Activated CD8-positive, alpha-beta memory T cell treated with anti-CD3 and anti-CD28 coated beads, Interleukin-2, amount 10 ng/mL, durations not matched to agents 7 days and 5 days (primary cell): ENCODE measurements at regions of chr17 and their contacts with region 1.

Region 1: GRCh38 chr17:2253768-2254406 is 49.7 kb downstream of the SMG6 start:
- DNase-seq: peak; percentile 73
- ATAC-seq: peak; percentile 89
- H3K4me3 Mint-ChIP-seq: peak overlapping the region; percentile 53
- H3K27ac Mint-ChIP-seq: peak overlapping the region; percentile 93
- H3K4me1 Mint-ChIP-seq: peaks cover 78% of the 10 kb centered on the region
- H3K27me3 Mint-ChIP-seq: no peaks in the 10 kb centered on the region

Region 2: GRCh38 chr17:2266045-2266864 is 12.4 kb after region 1 on chr17:
- CTCF ChIA-PET with region 1: interaction called, 60 read pairs
- DNase-seq: peak; percentile 98
- ATAC-seq: peak; percentile 76
- H3K4me3 Mint-ChIP-seq: peak overlapping the region; percentile 79
- H3K27ac Mint-ChIP-seq: peak overlapping the region; percentile 100
- H3K4me1 Mint-ChIP-seq: peaks cover 85% of the 10 kb centered on the region
- H3K27me3 Mint-ChIP-seq: no peaks in the 10 kb centered on the region

Region 3: GRCh38 chr17:2282297-2282873 is 28.5 kb after region 1 on chr17:
- CTCF ChIA-PET with region 1: interaction called, 15 read pairs
- DNase-seq: no peak
- ATAC-seq: peak; percentile 39
- H3K4me3 Mint-ChIP-seq: no peak overlapping the region
- H3K27ac Mint-ChIP-seq: peak overlapping the region; percentile 72
- H3K4me1 Mint-ChIP-seq: peaks cover 38% of the 10 kb centered on the region
- H3K27me3 Mint-ChIP-seq: no peaks in the 10 kb centered on the region